Activated T-helper 1 cell treated with anti-CD3 and anti-CD28 coated beads, Interleukin-12 subunit alpha, Interleukin-12 subunit beta, Interleukin-2, Interleukin-4 antibody, amounts not matched to agents 30 ng/mL and 10 ng/mL and 1 ng/mL, durations not matched to agents 14 hours and 24 hours and 36 hours (primary cell): ENCODE measurements at regions of chr19 and their contacts with region 1.

Region 1: DNA sequence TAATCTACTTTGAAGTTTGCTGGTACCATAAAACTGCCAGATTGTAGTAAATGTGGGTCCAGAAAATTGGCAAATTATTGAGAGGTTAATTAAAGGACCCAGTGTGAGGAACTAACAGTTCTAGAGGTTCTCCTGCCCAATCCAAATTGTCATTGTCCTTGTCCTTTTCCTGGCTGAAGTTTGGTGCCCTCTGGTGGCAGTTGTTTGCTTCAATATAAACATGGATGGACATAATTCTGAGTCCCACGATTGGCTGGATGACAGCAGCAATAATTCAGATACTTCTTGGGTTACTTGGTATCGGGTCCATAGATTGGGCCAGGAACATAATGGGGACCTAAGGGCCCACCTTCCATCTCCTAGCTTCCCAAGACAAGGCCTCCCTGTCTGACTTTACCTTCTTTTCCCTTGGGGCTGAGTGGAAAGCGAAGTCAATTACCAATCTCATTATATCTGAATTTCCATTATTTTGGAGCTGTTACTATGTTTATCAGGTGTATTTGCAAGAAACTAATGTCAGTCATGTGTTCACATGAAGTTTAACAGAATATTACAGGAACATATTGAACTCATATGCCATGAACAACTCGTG is 33.8 kb upstream of the GARRE1 start:
- DNase-seq: peak; percentile 38
- H3K4me3 Mint-ChIP-seq: no peak overlapping the region
- H3K27ac Mint-ChIP-seq: no peak overlapping the region
- H3K4me1 Mint-ChIP-seq: peaks cover 48% of the 10 kb centered on the region
- H3K27me3 Mint-ChIP-seq: no peaks in the 10 kb centered on the region

Region 2: GRCh38 chr19:34120846-34121639 is 99.5 kb before region 1 on chr19:
- intact Hi-C with region 1: loop called (anchors 5 kb)
- DNase-seq: peak; percentile 12
- H3K4me3 Mint-ChIP-seq: no peak overlapping the region
- H3K27ac Mint-ChIP-seq: no peak overlapping the region
- H3K4me1 Mint-ChIP-seq: peaks cover 9% of the 10 kb centered on the region
- H3K27me3 Mint-ChIP-seq: peaks cover 15% of the 10 kb centered on the region

Region 3: GRCh38 chr19:34351382-34351826 is 130.8 kb after region 1 on chr19:
- intact Hi-C with region 1: loop called (anchors 5 kb)
- DNase-seq: peak; percentile 11
- H3K4me3 Mint-ChIP-seq: peak overlapping the region; percentile 47
- H3K27ac Mint-ChIP-seq: peak overlapping the region; percentile 80
- H3K4me1 Mint-ChIP-seq: peaks cover 29% of the 10 kb centered on the region
- H3K27me3 Mint-ChIP-seq: no peaks in the 10 kb centered on the region

Region 4: GRCh38 chr19:34555434-34555833 is 334.9 kb after region 1 on chr19:
- intact Hi-C with region 1: no loop called
- DNase-seq: no peak
- H3K4me3 Mint-ChIP-seq: no peak overlapping the region
- H3K27ac Mint-ChIP-seq: no peak overlapping the region
- H3K4me1 Mint-ChIP-seq: no peaks in the 10 kb centered on the region
- H3K27me3 Mint-ChIP-seq: no peaks in the 10 kb centered on the region